ENCODE measurements at regions of chr16 and their contacts with region 1.

Region 1: DNA sequence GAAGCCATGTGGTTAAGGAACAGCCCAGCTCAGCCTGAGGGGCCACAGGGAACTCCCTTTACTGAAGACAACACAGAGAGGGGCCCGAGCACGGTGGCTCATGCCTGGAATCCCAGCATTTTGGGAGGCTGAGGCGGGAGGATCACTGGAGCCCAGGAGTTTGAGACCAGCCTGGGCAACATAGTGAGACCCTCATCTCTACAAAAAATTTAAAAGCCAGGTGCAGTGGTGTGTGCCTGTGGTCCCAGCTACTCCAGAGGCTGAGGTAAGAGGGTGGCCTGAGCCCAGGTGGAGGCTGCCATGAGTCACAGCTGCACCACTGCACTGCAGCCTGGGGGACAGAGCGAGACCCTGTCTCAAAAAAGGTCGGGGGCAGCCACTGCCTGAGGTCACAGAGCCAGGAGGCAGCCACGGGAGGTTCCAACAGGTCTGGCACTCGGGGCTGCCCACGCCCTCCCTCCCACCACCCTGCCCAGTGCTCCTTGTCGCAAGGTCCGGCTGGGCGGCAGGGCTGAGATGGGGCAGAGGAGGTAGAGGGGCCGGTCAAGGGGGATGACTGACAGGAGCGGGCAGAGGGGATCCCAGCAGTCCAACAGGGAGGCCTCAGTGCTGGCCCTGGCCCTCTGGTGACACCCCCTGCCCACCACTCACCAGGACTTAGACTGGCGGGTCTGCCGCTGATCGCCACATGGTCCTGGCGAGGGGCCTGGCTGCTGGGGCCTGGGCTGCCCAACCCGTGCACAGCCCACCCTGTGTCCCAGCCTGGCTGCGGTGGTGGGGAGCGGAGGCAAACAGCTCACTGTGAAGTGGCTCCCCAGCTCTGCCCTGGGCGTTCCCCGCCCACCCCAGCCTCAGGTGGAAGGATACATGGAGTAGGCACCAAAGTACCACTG is 3.4 kb downstream of the CYBA start:
- DNase-seq: no peak
- ATAC-seq: no peak

Region 2: GRCh38 chr16:88775825-88776224 is 128.4 kb after region 1 on chr16:
- intact Hi-C with region 1: loop called (anchors 1 kb)
- DNase-seq: no peak
- ATAC-seq: no peak

Measured in sciatic nerve (tissue), 2 donors.